Ascending aorta (tissue), 2 donors: ENCODE measurements at regions of chr12 and their contacts with region 1.

Region 1: GRCh38 chr12:55973598-55974307 is at the start of gene RAB5B:
- DNase-seq: peak; percentile 100
- H3K4me3 ChIP-seq: peak within 1 kb of the TSS; percentile 87
- H3K27ac ChIP-seq: peak within 1 kb of the TSS; percentile 89 to 95
- H3K4me1 ChIP-seq: peaks cover 3 to 18% of the 10 kb centered on the region in 2 donors
- H3K27me3 ChIP-seq: no peaks in the 10 kb centered on the region
- CTCF ChIP-seq: no peak
- total RNA-seq, gene RAB5B: 48.0 TPM

Region 2: GRCh38 chr12:55931780-55932550 is 41.8 kb before region 1 on chr12:
- intact Hi-C with region 1: loop called (anchors 1 kb)
- DNase-seq: peak in 1 of 2 donors; percentile 84
- H3K4me3 ChIP-seq: peak overlapping the region; percentile 72 to 98
- H3K27ac ChIP-seq: peak overlapping the region; percentile 92 to 95
- H3K4me1 ChIP-seq: peaks cover 8 to 27% of the 10 kb centered on the region in 2 donors
- H3K27me3 ChIP-seq: no peaks in the 10 kb centered on the region
- CTCF ChIP-seq: no peak